Right ventricle myocardium superior (tissue), 1 donor: ENCODE measurements at regions of chr13 and their contacts with region 1.

Region 1: GRCh38 chr13:97221989-97222700 is at the start of gene MBNL2:
- DNase-seq: peak; percentile 91
- ATAC-seq: peak; percentile 93
- total RNA-seq, gene MBNL2: 69.3 TPM

Region 2: DNA sequence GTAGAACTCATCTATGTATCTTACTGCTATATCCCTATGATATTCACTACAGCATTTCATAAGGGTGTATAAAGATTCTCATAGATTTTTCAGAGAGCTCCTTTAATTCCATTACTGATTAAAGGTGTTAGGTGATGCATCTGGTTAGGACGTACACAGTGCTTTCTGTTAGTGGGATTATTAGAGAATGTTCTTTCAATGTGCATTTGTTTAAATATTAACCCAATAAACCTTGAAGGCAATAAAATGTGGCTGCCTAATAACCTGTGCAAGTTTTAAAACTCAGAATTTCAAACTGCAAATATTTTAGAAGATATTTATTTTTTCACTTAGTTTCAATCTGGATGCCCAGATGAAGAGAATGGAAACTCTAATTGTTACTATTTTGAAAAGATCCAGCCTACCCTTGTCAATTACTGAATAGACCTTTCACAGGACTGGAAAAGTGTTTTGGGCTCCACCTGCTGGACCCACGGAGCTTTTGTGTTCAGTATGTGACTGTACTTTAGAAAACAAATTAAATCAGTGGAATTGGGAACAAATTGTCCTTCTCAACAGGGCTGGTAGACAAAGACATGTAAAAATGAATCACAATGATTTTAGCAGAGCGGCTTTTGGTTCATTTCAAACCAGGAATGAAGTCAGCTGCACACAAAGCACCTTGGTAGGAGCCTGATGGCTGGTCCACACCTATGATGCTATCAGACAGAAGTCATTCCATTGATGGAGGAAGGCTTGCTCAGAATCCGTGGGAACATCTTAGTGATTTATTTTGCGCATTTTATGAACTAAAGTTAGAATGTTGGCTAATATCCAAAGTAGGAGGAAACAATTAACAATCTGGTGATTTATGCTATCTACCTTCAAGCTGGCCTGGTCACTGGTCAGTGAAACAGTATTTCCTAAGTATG is 122.4 kb after region 1 on chr13:
- intact Hi-C with region 1: loop called (anchors 5 kb)
- DNase-seq: peak; percentile 75
- ATAC-seq: peak; percentile 89

Region 3: DNA sequence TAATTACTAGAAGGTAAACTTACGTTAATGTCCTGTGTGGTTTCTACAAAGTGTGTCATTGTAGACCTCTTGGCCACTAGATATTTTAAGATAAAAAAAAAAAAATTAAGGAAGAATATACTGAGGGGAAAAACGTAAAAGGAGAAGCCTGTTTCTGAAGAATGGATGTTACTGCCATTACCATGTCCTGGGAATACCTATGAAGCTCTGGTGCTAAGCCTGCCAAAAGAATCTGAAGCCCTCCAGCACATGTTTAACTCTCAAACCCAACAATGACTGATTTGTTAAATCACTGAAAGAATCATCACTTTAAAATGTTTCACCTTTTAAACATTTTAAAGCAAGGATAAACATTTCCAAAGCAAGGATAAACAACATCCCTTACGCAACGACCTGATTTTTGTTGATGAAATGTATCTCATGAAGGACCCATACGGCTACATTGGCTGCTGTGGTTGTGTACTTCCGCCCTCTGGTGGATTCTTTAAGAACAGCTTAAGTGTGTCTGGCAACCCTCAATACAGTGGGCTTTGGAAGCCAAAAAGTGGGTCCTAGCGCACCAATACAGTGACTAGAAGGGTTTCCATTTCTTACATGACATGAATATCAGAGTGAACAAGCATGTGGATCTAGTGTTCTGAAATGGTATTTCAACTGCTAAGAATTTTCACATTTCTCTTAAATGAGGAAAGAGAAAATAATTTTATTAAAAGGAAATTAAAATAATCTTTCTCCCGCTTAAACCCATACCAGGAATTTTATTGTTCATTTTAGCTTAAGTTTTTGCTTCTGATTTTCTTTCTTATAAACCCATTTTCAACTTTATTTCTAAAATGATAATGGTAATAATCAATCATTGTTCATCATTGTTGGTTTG is 137.3 kb after region 1 on chr13:
- intact Hi-C with region 1: loop called (anchors 5 kb)
- DNase-seq: no peak
- ATAC-seq: peak; percentile 92